ENCODE measurements at regions of chr7 and their contacts with region 1.

Region 1: DNA sequence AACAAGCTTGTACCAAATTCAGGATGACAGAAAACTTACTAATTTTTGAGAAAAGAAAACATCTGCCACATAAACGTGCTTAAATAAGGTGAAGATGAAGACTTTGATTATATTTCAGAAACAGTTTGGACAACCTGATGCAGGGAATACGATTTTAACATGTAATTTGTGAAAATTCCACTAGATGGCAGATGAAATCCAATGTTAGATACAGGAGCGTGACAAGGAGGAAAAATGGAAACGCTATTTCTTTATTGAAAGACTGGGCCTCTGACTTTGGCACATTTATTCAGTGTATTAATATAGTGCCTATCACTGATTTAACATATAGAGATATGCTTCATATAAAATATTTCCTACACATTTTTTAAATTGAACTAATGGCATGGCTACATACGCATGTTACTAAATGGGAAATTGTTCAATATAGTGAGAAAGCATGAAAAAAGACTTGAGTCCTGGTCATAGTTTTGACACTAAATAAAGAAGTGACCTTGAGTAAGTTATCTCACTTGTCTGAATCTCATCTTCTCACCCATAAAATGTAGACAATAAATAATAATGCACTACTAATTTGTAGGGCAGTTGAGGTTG is 60.7 kb downstream of the CD36 start:
- DNase-seq: peak; percentile 25
- ATAC-seq: peak; percentile 62
- H3K4me3 ChIP-seq: no peak overlapping the region
- H3K27ac ChIP-seq: no peak overlapping the region
- H3K4me1 ChIP-seq: no peaks in the 10 kb centered on the region
- H3K27me3 ChIP-seq: peaks cover 0 to 2% of the 10 kb centered on the region in 2 experiments; a peak in 1 of 5 replicates
- CTCF ChIP-seq: peak; percentile 74
- EP300 ChIP-seq: no peak
- POLR2A ChIP-seq: no peak
- RAD21 ChIP-seq: peak; percentile 55

Region 2: DNA sequence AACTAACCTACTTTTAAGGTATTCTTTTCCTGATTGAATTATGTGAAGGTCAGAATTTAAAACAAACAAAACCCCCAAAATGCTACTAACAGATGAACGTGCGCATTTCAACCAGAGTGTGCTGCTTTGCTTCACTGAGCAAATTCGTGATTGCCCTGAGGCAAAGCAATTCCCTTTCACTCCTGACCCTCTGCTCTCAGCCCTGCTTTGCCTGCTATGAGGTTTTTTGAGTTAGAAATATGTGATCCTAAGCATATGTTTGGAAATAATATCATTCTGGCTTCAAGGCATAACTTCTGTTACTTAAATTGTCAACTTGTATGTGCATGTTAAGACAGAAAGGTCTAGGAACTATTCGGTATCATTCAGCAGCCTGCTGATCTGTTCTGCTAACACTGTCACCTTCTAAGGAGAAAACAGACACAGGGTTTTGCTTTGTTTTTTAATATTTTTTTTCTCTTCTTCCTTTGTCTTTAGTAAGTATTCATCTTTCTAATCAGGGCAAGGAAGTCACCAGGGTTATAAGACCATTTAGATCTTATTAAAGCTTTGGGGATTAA is 311.4 kb before region 1 on chr7:
- CTCF ChIA-PET with region 1: no interaction called
- POLR2A ChIA-PET with region 1: no interaction called
- in situ Hi-C with region 1: no loop called
- intact Hi-C with region 1: no loop called
- DNase-seq: no peak
- ATAC-seq: no peak
- H3K4me3 ChIP-seq: no peak overlapping the region
- H3K27ac ChIP-seq: no peak overlapping the region
- H3K4me1 ChIP-seq: peaks cover 21% of the 10 kb centered on the region
- H3K27me3 ChIP-seq: no peaks in the 10 kb centered on the region
- CTCF ChIP-seq: no peak
- EP300 ChIP-seq: no peak
- POLR2A ChIP-seq: no peak
- RAD21 ChIP-seq: no peak

Region 3: GRCh38 chr7:81256991-81257390 is 557.8 kb after region 1 on chr7:
- CTCF ChIA-PET with region 1: interaction called, 23 read pairs
- POLR2A ChIA-PET with region 1: no interaction called
- in situ Hi-C with region 1: loop called (anchors 10 kb)
- intact Hi-C with region 1: loop called (anchors 1 kb)
- DNase-seq: peak; percentile 3
- ATAC-seq: peak; percentile 58
- H3K4me3 ChIP-seq: no peak overlapping the region
- H3K27ac ChIP-seq: no peak overlapping the region
- H3K4me1 ChIP-seq: no peaks in the 10 kb centered on the region
- H3K27me3 ChIP-seq: no peaks in the 10 kb centered on the region
- CTCF ChIP-seq: peak; percentile 62
- EP300 ChIP-seq: no peak
- POLR2A ChIP-seq: no peak
- RAD21 ChIP-seq: peak; percentile 62

Region 4: DNA sequence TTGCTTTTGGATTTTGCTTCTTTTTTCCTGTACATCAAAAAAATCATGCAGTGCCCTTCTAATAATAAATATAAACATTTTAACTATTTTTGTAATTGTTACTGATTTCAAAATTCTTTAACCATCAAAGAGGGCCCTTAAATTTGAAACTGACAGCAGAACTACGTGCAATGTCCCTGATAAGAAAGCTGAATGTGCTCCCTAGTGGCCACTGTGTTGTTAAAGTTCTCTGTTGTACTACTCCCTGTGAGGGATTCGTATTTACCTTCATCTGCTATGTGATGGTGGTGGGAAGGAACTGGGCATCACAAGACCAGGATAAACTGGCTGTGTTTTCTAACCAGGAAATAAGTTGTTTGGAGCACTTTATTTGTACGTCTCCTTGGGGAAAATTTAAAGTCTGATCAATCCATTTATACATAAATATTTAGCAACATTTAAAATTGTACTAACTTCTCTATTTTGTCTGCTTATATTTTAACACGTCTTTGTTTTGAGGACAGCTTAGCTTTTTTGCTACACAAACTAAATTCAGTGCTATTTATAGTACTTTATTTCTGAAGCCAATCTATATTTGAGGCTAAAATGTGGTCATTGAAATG is 748.3 kb after region 1 on chr7:
- CTCF ChIA-PET with region 1: interaction called, 3 read pairs
- POLR2A ChIA-PET with region 1: no interaction called
- in situ Hi-C with region 1: loop called (anchors 5 kb)
- intact Hi-C with region 1: no loop called
- DNase-seq: peak; percentile 27
- ATAC-seq: peak; percentile 89
- H3K4me3 ChIP-seq: no peak overlapping the region
- H3K27ac ChIP-seq: no peak overlapping the region
- H3K4me1 ChIP-seq: no peaks in the 10 kb centered on the region
- H3K27me3 ChIP-seq: no peaks in the 10 kb centered on the region
- CTCF ChIP-seq: peak; percentile 56
- EP300 ChIP-seq: no peak
- POLR2A ChIP-seq: no peak
- RAD21 ChIP-seq: no peak

Region 5: DNA sequence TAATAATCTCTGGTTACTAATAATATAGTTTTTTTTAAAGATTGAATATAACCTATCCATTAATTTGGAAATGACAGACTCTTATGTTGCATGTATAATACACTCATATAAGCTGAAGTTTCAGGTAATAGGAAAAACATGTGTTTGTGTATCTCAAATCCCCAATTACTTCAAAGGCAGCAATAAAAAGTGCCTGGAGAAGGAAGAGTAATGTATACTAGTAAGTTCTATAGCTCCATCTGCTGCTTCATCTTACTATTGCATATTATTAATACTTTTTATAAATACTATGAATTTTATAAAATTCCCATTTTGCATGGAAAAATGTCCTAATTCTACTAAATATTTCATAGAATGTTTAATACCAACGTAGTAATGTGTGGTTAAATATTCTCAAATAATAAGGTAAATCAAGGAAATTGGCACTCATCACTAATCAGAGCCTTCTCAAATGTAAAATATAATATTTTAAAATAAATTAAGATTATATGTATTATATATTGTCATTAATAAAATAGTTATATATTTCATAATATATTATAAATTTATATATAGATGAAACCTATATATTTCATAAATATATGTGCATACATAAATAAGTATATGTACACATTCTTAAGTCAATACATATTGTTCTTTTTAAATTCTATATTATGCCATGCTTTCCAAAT is 758.8 kb after region 1 on chr7:
- CTCF ChIA-PET with region 1: interaction called, 3 read pairs
- POLR2A ChIA-PET with region 1: no interaction called
- in situ Hi-C with region 1: no loop called
- intact Hi-C with region 1: loop called (anchors 1 kb)
- DNase-seq: no peak
- ATAC-seq: no peak
- H3K4me3 ChIP-seq: no peak overlapping the region
- H3K27ac ChIP-seq: no peak overlapping the region
- H3K4me1 ChIP-seq: no peaks in the 10 kb centered on the region
- H3K27me3 ChIP-seq: no peaks in the 10 kb centered on the region
- CTCF ChIP-seq: no peak
- EP300 ChIP-seq: no peak
- POLR2A ChIP-seq: no peak
- RAD21 ChIP-seq: no peak

Region 6: DNA sequence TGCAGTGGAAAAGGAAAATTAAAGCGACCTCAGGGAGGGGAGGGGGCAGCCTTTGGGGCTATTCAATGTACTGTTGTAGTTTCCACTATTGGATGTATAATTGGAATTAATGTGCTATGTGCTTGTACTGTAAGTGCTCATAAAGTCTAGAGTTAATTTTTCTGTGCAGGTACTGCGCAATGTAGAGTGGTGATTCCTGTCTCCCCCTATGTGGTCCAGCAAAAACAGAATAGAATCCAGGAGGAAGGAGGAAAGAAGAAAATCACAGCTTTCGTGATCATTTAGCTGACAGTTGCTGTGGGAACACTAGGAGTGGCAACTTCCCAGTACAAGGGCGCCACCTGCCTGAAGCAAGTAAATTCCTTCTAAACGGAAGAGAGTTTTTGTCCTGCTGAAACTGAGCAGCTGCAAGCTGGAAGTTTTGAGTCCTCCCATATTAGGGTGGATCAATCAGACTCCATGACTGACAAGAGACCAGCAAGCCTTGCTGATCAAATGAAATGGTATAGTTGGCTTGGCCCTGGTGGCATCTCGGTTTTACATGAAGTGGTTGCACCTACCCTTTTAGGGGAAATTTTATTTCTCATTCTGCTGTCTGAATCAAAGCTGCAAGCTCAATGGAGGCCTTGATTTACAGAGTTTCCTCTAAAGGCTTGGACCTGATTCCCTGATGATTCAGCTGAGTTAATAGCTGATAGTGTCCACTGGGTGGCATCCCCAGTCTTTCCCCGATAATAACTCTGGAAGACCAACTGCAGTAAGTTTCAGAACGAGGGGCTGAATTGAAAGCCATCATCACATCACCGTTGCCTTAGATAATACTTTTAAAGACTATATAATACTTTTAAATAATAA is 771.0 kb after region 1 on chr7:
- CTCF ChIA-PET with region 1: interaction called, 22 read pairs
- POLR2A ChIA-PET with region 1: no interaction called
- in situ Hi-C with region 1: no loop called
- intact Hi-C with region 1: loop called (anchors 1 kb)
- DNase-seq: peak; percentile 42
- ATAC-seq: peak; percentile 92
- H3K4me3 ChIP-seq: no peak overlapping the region
- H3K27ac ChIP-seq: no peak overlapping the region
- H3K4me1 ChIP-seq: peaks cover 7% of the 10 kb centered on the region; the same call in 1 of the 2 replicates
- H3K27me3 ChIP-seq: no peaks in the 10 kb centered on the region
- CTCF ChIP-seq: peak; percentile 84
- EP300 ChIP-seq: no peak
- POLR2A ChIP-seq: no peak
- RAD21 ChIP-seq: peak; percentile 41